Common myeloid progenitor, CD34-positive (primary cell): ENCODE measurements at regions of chr2 and their contacts with region 1.

Region 1: DNA sequence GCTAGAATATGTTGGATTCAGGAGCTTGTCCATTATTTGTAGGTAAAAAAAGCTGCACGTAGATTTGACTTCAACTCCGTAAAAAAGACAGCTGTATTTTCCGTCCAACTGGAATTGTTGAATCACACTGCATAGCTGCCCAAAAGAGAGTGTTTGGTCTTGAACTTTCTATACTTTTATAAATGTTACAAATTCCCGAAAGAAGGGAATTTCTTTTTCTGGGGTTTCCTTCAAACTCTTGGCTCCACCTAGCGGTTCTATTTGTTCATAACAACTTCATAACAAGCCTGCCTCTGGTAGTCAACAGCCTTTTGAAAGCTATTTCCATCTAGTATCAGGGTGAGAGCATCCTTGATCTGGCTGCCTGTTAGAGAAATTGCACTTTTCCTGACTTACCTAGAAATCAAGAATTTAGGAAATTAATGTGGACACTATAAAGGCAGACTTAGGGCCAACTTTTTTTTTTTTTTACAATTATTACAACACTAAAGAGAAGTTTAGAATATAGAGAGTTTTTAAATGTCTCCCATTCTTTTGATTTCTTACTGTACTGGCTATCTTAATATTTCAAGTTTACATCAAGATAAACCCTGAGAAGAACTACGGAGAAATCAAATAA is 48.1 kb downstream of the TMEM185B start:
- DNase-seq: peak; percentile 56 to 72 (median 69)
- H3K4me3 ChIP-seq: peak overlapping the region in 2 of 7 experiments; percentile 41 to 48
- H3K27ac ChIP-seq: no peak overlapping the region
- H3K4me1 ChIP-seq: peaks cover 12 to 21% (median 18%) of the 10 kb centered on the region in 4 experiments
- H3K27me3 ChIP-seq: no peaks in the 10 kb centered on the region

Region 2: DNA sequence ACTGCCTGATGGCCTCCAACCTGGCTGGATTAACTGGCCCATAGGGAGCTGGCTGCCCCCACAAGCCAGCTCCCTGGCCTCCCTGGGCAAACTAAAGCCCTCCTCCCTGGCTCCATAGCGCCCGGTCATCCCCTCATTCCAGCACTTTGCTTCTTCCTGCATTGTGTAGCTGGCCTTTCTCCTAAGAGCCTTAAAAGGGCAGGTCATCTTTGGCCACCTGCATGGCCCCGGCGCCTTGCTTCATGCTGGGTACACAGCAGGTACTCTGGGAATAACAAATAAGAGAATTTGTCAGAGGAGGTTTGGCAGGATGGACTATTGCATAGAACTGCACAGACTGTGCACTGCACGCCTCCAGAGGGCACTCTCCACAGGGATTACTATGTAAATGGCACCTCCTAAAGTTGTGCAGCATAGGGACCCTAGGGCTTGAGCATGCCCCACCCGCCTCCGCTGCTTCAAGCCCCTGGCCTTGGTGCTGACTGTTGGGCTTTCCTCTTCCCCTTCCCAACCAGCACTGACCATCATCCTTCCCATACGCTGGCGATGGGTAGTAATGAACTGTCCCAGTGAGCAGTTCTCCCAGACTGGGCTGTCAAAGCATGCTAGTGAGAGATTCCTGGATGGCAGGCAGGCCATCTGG is 940.6 kb before region 1 on chr2:
- CTCF ChIA-PET with region 1: no interaction called
- POLR2A ChIA-PET with region 1: no interaction called
- DNase-seq: peak in 2 of 3 donors; percentile 14 to 15
- H3K4me3 ChIP-seq: no peak overlapping the region
- H3K27ac ChIP-seq: no peak overlapping the region
- H3K4me1 ChIP-seq: peaks cover 0 to 13% (median 0%) of the 10 kb centered on the region in 4 experiments
- H3K27me3 ChIP-seq: no peaks in the 10 kb centered on the region

Region 3: GRCh38 chr2:119641562-119642258 is 533.4 kb before region 1 on chr2:
- CTCF ChIA-PET with region 1: interaction called, 11 read pairs
- POLR2A ChIA-PET with region 1: no interaction called
- DNase-seq: peak; percentile 63 to 82 (median 78)
- H3K4me3 ChIP-seq: no peak overlapping the region
- H3K27ac ChIP-seq: no peak overlapping the region
- H3K4me1 ChIP-seq: peaks cover 0 to 6% (median 0%) of the 10 kb centered on the region in 4 experiments
- H3K27me3 ChIP-seq: peaks cover 0 to 3% (median 0%) of the 10 kb centered on the region in 5 experiments

Region 4: DNA sequence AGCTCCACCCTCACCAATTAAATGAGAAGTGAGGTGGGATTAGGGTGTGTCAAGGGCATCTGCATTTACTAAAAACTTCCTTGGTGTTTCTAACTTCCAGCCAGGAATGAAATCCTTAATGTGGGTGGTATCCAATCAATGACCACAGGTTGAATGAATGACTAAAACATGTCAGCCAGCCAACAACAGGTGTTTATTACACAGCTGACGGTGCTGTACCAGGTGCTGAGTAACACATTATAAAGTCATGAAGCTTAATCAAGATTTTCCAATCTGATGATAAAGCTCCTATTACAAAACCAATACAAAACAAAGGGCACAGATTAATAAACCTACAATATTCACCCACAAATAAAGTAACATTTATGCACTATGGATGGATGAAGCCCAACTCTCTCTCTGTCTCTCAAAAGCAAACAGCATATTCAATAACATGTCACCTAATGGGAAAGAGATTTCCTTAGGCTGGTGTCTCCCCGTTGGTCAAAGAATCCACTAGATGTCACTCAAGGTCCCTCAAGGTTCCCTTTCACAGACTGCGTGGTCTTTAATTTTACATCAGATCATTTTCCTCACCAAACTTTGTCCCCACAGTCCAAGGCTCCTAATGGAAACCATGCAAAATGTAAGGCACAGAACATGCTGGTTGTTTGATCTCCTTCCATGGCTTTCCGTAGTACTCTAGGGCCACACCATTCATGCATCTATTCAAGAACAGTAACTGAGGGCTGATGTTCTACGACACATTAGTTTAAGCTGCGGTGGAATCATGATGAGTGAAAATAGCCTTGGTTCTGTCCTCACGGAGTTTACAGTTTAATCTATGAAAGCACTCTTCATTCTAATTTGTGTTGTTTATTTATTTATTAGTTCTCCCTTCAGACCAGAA is 421.8 kb before region 1 on chr2:
- CTCF ChIA-PET with region 1: interaction called, 12 read pairs
- POLR2A ChIA-PET with region 1: interaction called, 3 read pairs
- DNase-seq: peak; percentile 59 to 77 (median 71)
- H3K4me3 ChIP-seq: no peak overlapping the region
- H3K27ac ChIP-seq: no peak overlapping the region
- H3K4me1 ChIP-seq: peaks cover 0 to 7% (median 1%) of the 10 kb centered on the region in 4 experiments
- H3K27me3 ChIP-seq: peaks cover 0 to 3% (median 0%) of the 10 kb centered on the region in 5 experiments

Region 5: DNA sequence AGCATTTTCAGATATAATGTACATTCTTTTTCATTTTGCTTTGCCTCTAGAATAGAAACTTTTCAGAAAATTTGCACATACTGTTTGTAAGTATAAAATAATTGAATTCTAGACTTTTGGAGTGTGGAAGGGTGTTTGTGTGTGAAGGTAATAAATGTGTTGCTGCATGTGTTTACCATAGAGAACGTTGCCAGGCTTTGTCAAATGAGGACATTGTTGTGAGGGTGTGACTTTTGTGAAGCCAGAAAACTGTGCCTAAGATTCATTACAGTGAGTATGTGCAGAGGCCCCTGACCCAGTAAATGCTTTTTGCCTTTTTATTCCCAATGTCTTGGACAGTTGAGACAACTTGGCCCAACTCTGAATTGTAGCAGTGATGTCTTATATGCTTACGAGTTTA is 192.6 kb before region 1 on chr2:
- CTCF ChIA-PET with region 1: no interaction called
- POLR2A ChIA-PET with region 1: no interaction called
- DNase-seq: no peak
- H3K4me3 ChIP-seq: no peak overlapping the region
- H3K27ac ChIP-seq: no peak overlapping the region
- H3K4me1 ChIP-seq: no peaks in the 10 kb centered on the region
- H3K27me3 ChIP-seq: no peaks in the 10 kb centered on the region

Region 6: GRCh38 chr2:120161190-120161589 is 13.9 kb before region 1 on chr2:
- CTCF ChIA-PET with region 1: interaction called, 12 read pairs
- POLR2A ChIA-PET with region 1: no interaction called
- DNase-seq: no peak
- H3K4me3 ChIP-seq: no peak overlapping the region
- H3K27ac ChIP-seq: no peak overlapping the region
- H3K4me1 ChIP-seq: no peaks in the 10 kb centered on the region
- H3K27me3 ChIP-seq: no peaks in the 10 kb centered on the region

Region 7: GRCh38 chr2:120312861-120313694 is 138.0 kb after region 1 on chr2:
- CTCF ChIA-PET with region 1: interaction called, 15 read pairs
- POLR2A ChIA-PET with region 1: no interaction called
- DNase-seq: peak; percentile 77 to 84 (median 80)
- H3K4me3 ChIP-seq: peak overlapping the region; percentile 4 to 75 (median 56)
- H3K27ac ChIP-seq: no peak overlapping the region
- H3K4me1 ChIP-seq: peaks cover 0 to 35% (median 23%) of the 10 kb centered on the region in 4 experiments
- H3K27me3 ChIP-seq: no peaks in the 10 kb centered on the region

Region 8: GRCh38 chr2:120343433-120344105 is 168.5 kb after region 1 on chr2:
- CTCF ChIA-PET with region 1: no interaction called
- POLR2A ChIA-PET with region 1: no interaction called
- DNase-seq: peak; percentile 77 to 85 (median 85)
- H3K4me3 ChIP-seq: peak overlapping the region in 3 of 7 experiments; percentile 11 to 45 (median 19)
- H3K27ac ChIP-seq: no peak overlapping the region
- H3K4me1 ChIP-seq: peaks cover 0 to 45% (median 29%) of the 10 kb centered on the region in 4 experiments
- H3K27me3 ChIP-seq: peaks cover 0 to 96% (median 43%) of the 10 kb centered on the region in 5 experiments